Activated CD4-positive, alpha-beta T cell treated with anti-CD3 and anti-CD28 coated beads, Interleukin-2, amount 10 ng/mL, durations not matched to agents 24 days and 14 days (primary cell): ENCODE measurements at regions of chr9 and their contacts with region 1.

Region 1: GRCh38 chr9:92790542-92791527 is 26.2 kb upstream of the BICD2 start:
- DNase-seq: peak; percentile 92
- H3K4me3 Mint-ChIP-seq: no peak overlapping the region
- H3K27ac Mint-ChIP-seq: no peak overlapping the region
- H3K4me1 Mint-ChIP-seq: peaks cover 8% of the 10 kb centered on the region
- H3K27me3 Mint-ChIP-seq: peaks cover 9% of the 10 kb centered on the region

Region 2: GRCh38 chr9:92140074-92140753 is 650.6 kb before region 1 on chr9:
- intact Hi-C with region 1: loop called (anchors 2 kb)
- DNase-seq: peak; percentile 93
- H3K4me3 Mint-ChIP-seq: peak overlapping the region; percentile 70
- H3K27ac Mint-ChIP-seq: no peak overlapping the region
- H3K4me1 Mint-ChIP-seq: peaks cover 10% of the 10 kb centered on the region
- H3K27me3 Mint-ChIP-seq: peaks cover 35% of the 10 kb centered on the region

Region 3: GRCh38 chr9:92716557-92716956 is 74.3 kb before region 1 on chr9:
- intact Hi-C with region 1: loop called (anchors 1 kb)
- DNase-seq: peak; percentile 96
- H3K4me3 Mint-ChIP-seq: no peak overlapping the region
- H3K27ac Mint-ChIP-seq: no peak overlapping the region
- H3K4me1 Mint-ChIP-seq: peaks cover 8% of the 10 kb centered on the region
- H3K27me3 Mint-ChIP-seq: no peaks in the 10 kb centered on the region

Region 4: DNA sequence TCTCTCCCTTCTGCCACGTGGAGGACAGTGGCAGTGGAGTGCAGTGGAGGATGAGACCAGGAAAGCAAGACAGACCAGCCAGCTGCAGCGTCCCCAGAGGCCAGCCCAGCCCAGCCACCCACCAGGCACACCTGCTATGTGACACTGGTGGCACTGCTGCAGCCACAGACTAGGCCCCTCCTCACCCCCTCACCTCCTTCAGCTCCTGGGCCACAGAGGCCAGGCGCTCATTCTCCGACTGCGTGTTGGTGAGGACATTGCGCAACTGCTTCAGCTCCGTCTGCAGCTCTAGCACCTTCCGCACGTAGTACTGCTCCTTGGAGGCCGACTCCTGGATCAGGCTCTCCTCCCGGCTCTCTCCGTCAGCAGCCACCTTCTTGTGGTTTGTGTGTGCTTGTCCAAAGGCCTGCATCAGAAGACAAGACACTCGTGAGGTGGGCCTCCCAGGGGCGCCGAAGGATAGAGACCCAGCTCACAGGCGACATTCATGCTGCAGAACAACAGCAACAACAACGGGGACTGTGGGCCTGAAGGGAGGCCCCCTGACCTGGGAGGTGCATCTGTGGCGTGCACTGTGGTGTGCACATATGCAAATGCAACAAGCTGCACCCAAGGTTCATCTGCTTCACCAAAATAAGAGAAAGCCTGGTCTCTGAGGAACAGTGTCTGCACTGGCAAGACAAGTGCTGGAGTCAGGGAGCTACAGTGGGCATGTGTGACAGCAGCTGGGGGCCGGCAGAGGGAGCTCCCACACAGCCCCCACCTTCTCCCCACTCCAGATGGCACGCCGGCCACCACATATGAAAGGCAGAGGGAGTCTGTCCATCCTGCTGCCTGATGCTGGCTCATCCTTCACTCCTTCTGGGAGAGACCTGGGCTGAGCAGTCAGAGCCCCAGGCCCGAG is 61.8 kb before region 1 on chr9:
- intact Hi-C with region 1: no loop called
- DNase-seq: no peak
- H3K4me3 Mint-ChIP-seq: no peak overlapping the region
- H3K27ac Mint-ChIP-seq: no peak overlapping the region
- H3K4me1 Mint-ChIP-seq: peaks cover 16% of the 10 kb centered on the region
- H3K27me3 Mint-ChIP-seq: no peaks in the 10 kb centered on the region

Region 5: DNA sequence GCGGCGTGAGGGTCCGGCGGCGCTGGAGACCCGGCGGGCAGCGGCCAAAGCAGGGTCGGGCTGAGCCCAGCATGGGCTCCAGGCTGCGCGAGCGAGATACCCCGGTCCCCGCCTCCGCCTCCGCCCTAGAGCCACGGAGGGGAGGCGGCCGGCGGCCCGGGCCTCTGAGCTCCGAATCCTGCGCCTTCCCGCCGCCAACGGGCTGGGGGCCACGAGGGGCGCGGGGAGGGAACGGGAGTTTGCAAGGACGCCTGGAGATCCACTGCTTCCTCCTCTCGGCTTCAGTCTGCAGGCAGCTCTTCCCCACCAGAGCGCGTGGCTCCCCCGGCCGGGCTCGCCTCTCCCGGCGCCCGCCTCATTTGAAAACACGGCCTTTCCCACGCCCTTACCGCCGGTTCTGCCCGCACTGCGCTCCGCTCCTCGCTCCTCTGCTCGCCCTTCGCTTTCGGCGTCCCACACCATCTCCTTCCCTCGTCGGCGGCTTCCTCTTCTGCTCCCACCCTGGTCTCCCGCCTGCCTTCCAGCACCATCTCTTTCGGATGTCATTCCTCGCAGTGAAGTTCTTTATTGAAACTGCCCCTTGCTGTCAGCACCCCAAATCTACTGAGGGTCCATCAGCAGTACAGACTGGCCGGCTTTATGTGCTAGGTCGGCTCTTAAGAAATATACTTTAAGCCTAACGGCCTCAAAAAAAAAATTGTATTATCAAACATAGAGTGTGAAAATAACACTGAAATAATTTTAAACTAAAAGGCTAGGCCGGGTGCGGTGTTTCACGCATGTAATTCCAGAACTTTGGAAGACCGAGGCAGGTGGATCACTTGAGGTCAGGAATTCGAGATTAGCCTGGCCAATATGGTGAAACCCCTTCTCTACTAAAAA is 555.6 kb after region 1 on chr9:
- intact Hi-C with region 1: no loop called
- DNase-seq: no peak
- H3K4me3 Mint-ChIP-seq: peak overlapping the region; percentile 78
- H3K27ac Mint-ChIP-seq: no peak overlapping the region
- H3K4me1 Mint-ChIP-seq: peaks cover 3% of the 10 kb centered on the region
- H3K27me3 Mint-ChIP-seq: peaks cover 56% of the 10 kb centered on the region

Region 6: GRCh38 chr9:93635186-93636111 is 844.6 kb after region 1 on chr9:
- intact Hi-C with region 1: no loop called
- DNase-seq: no peak
- H3K4me3 Mint-ChIP-seq: no peak overlapping the region
- H3K27ac Mint-ChIP-seq: peak overlapping the region; percentile 60
- H3K4me1 Mint-ChIP-seq: no peaks in the 10 kb centered on the region
- H3K27me3 Mint-ChIP-seq: no peaks in the 10 kb centered on the region